Heart right ventricle (tissue), 16 donors: ENCODE measurements at regions of chr18 and their contacts with region 1.

Region 1: GRCh38 chr18:361939-362309 is 94.1 kb upstream of the THOC1 start:
- DNase-seq: no peak
- ATAC-seq: peak in 5 of 8 donors; percentile 16 to 88 (median 42)
- H3K4me3 ChIP-seq: no peak overlapping the region
- H3K27ac ChIP-seq: peak overlapping the region in 2 of 10 donors; percentile 21 to 47
- H3K4me1 ChIP-seq: peaks cover 0 to 33% (median 0%) of the 10 kb centered on the region in 9 donors
- H3K27me3 ChIP-seq: no peaks in the 10 kb centered on the region
- CTCF ChIP-seq: no peak

Region 2: DNA sequence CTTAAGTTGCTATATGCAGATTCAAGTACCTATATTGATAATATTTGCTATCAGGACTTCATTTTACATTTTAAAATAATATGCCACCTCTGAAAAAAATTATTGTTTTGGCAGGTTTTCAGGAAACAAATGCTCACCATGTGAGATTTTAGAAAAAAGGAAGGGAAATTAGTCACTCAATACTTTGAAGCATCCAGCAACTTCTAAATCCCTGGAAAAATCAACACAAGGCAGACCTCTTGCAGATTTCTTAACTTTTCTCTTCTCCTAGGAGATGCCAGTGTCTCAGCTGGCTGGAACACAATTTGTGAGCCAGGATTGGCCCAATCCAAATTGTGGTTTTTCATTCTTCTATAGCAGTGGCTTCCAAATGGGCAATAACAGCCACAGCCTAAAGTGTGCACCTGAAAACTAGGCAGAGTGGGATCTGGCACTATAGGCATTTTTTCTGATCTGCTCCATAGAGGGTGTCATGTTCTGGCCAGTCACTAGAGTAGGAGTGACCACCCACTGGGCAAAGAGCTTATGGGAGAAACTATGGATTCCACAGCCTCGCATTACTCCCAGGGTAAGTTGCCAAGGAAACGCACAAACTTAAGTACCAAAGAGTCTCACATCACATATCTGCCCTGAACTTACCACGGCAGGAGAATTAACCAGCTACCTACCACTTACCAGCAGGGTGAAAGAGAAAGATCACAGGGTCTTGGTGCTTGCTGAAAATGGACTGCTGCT is 66.0 kb before region 1 on chr18:
- intact Hi-C with region 1: no loop called
- DNase-seq: no peak
- ATAC-seq: no peak
- H3K4me3 ChIP-seq: no peak overlapping the region
- H3K27ac ChIP-seq: no peak overlapping the region
- H3K4me1 ChIP-seq: peaks cover 0 to 3% (median 0%) of the 10 kb centered on the region in 9 donors
- H3K27me3 ChIP-seq: peaks cover 0 to 4% (median 0%) of the 10 kb centered on the region in 7 donors
- CTCF ChIP-seq: no peak

Region 3: DNA sequence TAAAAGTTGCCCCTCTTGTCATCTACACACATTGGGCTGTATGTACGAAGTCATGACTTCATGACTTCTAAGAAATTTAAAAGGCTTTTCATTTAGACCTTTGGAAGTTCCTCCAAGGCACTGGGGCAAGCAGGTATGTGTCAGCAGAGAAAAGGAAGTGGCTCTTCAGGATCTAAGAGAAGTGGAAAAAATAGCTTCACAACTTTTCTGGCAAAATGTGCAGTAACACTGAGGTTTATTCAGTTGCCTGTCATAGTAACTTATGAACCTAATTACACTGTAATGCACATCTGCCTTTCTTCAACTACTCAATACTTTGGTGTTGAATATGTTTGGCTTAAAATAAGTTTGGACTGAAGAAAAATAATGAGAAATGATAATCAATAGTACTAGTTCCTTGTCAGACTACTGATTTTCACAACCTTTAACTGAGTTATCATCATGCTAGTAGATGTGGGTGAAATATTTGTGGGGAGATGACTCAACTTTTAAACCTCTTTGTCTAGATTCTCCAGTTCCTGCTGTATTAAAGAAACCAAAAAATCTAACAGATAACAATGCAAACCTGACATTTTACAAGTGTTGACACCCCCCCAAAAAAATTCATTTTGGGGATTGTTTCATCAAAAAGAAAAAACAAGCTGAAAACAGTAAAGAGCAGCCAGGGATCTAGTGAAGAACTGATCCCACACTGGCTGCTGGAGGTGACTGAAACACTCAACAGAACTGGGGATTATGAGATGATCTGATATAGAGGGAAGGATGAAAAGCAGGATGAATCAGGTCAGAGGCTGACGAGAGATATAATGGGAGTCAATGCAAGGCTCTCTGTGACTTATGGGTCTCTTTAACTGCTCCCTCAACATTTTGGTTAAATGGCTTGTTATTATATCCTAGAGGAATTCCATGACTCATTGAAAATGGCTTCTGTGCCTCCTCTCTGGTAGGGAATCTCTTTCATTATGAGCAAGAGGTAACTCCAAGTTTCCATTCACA is 54.0 kb after region 1 on chr18:
- intact Hi-C with region 1: loop called in 1 of 10 experiments (anchors 10 kb)
- DNase-seq: no peak
- ATAC-seq: no peak
- H3K4me3 ChIP-seq: no peak overlapping the region
- H3K27ac ChIP-seq: peak overlapping the region in 1 of 10 donors; percentile 12
- H3K4me1 ChIP-seq: peaks cover 0 to 34% (median 3%) of the 10 kb centered on the region in 9 donors
- H3K27me3 ChIP-seq: no peaks in the 10 kb centered on the region
- CTCF ChIP-seq: no peak

Region 4: GRCh38 chr18:616380-616995 is 254.6 kb after region 1 on chr18:
- intact Hi-C with region 1: no loop called
- DNase-seq: no peak
- ATAC-seq: peak in 7 of 8 donors; percentile 33 to 72 (median 68)
- H3K4me3 ChIP-seq: no peak overlapping the region
- H3K27ac ChIP-seq: no peak overlapping the region
- H3K4me1 ChIP-seq: peaks cover 0 to 17% (median 0%) of the 10 kb centered on the region in 9 donors
- H3K27me3 ChIP-seq: peaks cover 0 to 12% (median 8%) of the 10 kb centered on the region in 7 donors
- CTCF ChIP-seq: peak; percentile 40 to 89 (median 73)

Region 5: GRCh38 chr18:1618364-1618763 is 1256.4 kb after region 1 on chr18:
- intact Hi-C with region 1: no loop called
- DNase-seq: no peak
- ATAC-seq: no peak
- H3K4me3 ChIP-seq: no peak overlapping the region
- H3K27ac ChIP-seq: no peak overlapping the region
- H3K4me1 ChIP-seq: no peaks in the 10 kb centered on the region
- H3K27me3 ChIP-seq: no peaks in the 10 kb centered on the region
- CTCF ChIP-seq: no peak